ENCODE measurements at regions of chr13 and their contacts with region 1.

Region 1: GRCh38 chr13:102845630-102846260 is at the start of gene ERCC5:
- DNase-seq: peak; percentile 92
- ATAC-seq: peak; percentile 97
- H3K4me3 ChIP-seq: peak within 1 kb of the TSS; percentile 86 to 94 (median 89)
- H3K27ac ChIP-seq: peak within 1 kb of the TSS; percentile 90
- H3K4me1 ChIP-seq: peaks cover 15% of the 10 kb centered on the region
- H3K27me3 ChIP-seq: no peaks in the 10 kb centered on the region; a peak in 1 of 5 replicates
- CTCF ChIP-seq: peak; percentile 85
- EP300 ChIP-seq: peak in 1 of 2 experiments; percentile 36; a peak in 1 of 4 replicates
- POLR2A ChIP-seq: peak; percentile 77 to 92
- RAD21 ChIP-seq: peak; percentile 47
- total RNA-seq, gene ERCC5: 32.7 and 35.5 TPM in 2 replicates

Region 2: GRCh38 chr13:102580552-102581169 is 265.1 kb before region 1 on chr13:
- CTCF ChIA-PET with region 1: interaction called, 12 read pairs
- POLR2A ChIA-PET with region 1: interaction called, 4 read pairs
- in situ Hi-C with region 1: no loop called
- intact Hi-C with region 1: loop called (anchors 1 kb)
- DNase-seq: peak; percentile 55
- ATAC-seq: peak; percentile 87
- H3K4me3 ChIP-seq: no peak overlapping the region
- H3K27ac ChIP-seq: no peak overlapping the region
- H3K4me1 ChIP-seq: no peaks in the 10 kb centered on the region
- H3K27me3 ChIP-seq: peaks cover 0 to 14% of the 10 kb centered on the region in 2 experiments; a peak in 4 of 5 replicates
- CTCF ChIP-seq: peak; percentile 78
- EP300 ChIP-seq: no peak
- POLR2A ChIP-seq: no peak
- RAD21 ChIP-seq: peak; percentile 55

Region 3: DNA sequence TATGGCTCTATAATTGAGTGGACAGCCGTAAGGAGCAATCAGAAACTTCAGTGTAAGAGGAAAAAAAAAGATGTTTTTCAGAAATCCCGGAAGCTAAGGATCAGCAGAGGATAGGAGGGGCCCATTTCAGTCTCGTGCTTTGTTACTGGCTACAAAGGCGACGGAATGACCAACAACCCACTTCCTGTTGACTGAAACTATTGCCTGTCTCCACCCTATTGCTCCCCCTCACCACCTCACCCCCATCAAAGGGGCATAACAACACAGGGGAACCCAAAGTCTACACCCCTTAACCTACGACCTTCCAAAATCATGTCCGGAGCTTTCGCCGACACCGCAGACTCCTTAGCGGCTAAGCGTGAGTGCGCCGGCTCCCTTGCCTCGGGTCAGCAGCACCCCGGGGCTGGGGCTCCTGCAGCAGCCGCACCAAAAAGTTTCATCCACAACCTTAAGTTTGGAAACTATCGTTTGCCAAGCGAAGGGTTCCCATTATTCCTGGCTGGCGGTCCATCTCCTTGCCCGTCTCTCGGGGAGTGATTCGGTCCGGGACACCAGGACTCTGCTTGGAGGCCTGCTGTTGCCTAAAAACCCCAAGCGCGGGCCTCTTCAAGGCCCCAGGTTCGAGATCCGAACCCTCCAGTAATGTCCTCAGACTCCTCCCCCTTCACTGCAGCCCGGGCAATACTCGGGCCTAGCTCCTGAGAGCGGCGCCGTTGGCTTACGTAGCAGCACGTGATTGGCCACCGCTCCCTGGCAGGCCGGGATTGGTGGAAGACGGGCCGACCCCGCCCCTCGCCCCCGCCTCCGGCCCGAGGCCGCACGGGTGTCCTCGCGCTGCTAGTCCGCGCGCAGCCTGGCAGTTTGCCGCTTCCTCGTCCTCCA is 249.4 kb before region 1 on chr13 and contains the start of gene TPP2:
- CTCF ChIA-PET with region 1: interaction called, 4 read pairs
- POLR2A ChIA-PET with region 1: interaction called, 31 read pairs
- in situ Hi-C with region 1: loop called (anchors 5 kb)
- intact Hi-C with region 1: loop called (anchors 1 kb)
- DNase-seq: peak; percentile 94
- ATAC-seq: peak; percentile 93
- H3K4me3 ChIP-seq: peak within 1 kb of the TSS; percentile 85 to 92 (median 88)
- H3K27ac ChIP-seq: peak within 1 kb of the TSS; percentile 94
- H3K4me1 ChIP-seq: peaks cover 49% of the 10 kb centered on the region
- H3K27me3 ChIP-seq: no peaks in the 10 kb centered on the region; a peak in 2 of 5 replicates
- CTCF ChIP-seq: no peak
- EP300 ChIP-seq: no peak
- POLR2A ChIP-seq: peak; percentile 83 to 94
- RAD21 ChIP-seq: no peak
- total RNA-seq, gene TPP2: 52.1 and 71.7 TPM in 2 replicates

Region 4: DNA sequence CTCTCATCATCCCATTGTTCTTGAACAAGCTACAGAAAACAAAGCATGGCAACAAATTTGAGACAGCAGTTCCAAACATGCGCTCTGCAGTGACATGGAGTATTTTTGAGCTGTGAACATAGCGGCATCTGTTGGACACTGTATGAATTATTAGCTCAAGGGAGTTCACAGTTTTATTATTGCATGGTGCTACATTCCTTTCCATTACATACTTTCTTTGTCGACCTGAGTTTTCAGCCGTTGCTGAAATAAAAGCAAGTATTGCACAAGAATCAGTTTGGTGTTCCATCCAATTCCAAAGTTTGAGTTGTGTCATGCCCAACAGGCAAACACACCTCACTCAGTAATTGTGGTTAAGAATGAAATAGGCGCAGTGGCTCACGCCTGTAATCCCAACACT is 120.8 kb before region 1 on chr13:
- CTCF ChIA-PET with region 1: interaction called, 10 read pairs
- POLR2A ChIA-PET with region 1: no interaction called
- in situ Hi-C with region 1: no loop called
- intact Hi-C with region 1: loop called (anchors 1 kb)
- DNase-seq: peak; percentile 82
- ATAC-seq: peak; percentile 97
- H3K4me3 ChIP-seq: no peak overlapping the region
- H3K27ac ChIP-seq: no peak overlapping the region
- H3K4me1 ChIP-seq: peaks cover 9% of the 10 kb centered on the region; the same call in 1 of the 2 replicates
- H3K27me3 ChIP-seq: no peaks in the 10 kb centered on the region
- CTCF ChIP-seq: peak; percentile 81
- EP300 ChIP-seq: peak in 1 of 2 experiments; percentile 20; a peak in 1 of 4 replicates
- POLR2A ChIP-seq: no peak
- RAD21 ChIP-seq: 0 out of 2 replicates have a peak, but pooled peaks have one; percentile 32

Region 5: DNA sequence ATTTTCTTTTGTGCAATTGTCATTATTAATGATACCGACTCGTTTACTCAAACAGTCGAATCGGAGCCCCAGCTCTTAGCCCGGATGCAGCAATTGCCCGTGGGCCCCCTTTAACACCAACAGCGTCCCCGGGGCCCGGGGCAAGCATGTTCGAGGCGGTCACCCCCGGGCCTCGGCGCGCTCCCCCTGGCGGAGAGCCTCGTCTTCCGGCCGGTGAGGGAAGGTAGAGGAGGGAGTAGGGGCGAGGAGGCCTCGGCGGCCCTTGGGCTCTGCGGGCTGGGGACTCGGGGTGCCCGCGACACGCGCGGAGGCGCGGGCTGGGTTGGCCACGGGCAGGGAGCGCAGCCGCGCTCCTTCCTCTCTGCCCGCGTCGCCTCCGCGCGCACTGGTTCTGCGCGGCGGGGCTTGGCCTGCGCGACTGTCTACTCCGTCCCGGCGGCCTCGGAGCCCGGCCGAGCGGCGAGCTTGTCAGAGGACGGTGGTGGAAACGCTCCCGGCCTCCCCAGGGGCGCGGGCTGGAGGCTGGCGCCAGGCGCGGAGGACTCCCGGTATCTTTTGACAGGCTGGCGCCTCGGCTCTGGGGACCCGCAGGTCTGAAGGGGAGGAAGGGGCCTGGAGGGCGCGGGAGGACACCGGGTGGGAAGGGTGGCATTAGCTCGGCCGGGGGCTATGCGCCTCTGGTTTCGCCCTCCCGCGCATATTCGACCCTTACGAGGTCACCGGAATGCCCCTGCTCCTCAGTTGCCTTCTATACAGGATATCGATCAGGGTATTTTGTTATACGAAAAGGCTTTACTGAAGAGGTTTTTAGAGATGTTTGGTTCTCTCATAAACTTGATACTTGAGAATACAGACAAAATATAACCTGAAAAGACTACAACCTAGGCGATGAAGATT is 45.4 kb before region 1 on chr13:
- CTCF ChIA-PET with region 1: interaction called, 4 read pairs
- POLR2A ChIA-PET with region 1: interaction called, 21 read pairs
- in situ Hi-C with region 1: no loop called
- intact Hi-C with region 1: loop called (anchors 1 kb)
- DNase-seq: peak; percentile 66
- ATAC-seq: peak; percentile 88
- H3K4me3 ChIP-seq: peak overlapping the region; percentile 70 to 89 (median 83)
- H3K27ac ChIP-seq: peak overlapping the region; percentile 78
- H3K4me1 ChIP-seq: peaks cover 24% of the 10 kb centered on the region
- H3K27me3 ChIP-seq: no peaks in the 10 kb centered on the region; a peak in 1 of 5 replicates
- CTCF ChIP-seq: peak; percentile 89
- EP300 ChIP-seq: no peak
- POLR2A ChIP-seq: peak; percentile 37 to 67; a peak in 2 of 4 replicates
- RAD21 ChIP-seq: peak; percentile 70

Region 6: DNA sequence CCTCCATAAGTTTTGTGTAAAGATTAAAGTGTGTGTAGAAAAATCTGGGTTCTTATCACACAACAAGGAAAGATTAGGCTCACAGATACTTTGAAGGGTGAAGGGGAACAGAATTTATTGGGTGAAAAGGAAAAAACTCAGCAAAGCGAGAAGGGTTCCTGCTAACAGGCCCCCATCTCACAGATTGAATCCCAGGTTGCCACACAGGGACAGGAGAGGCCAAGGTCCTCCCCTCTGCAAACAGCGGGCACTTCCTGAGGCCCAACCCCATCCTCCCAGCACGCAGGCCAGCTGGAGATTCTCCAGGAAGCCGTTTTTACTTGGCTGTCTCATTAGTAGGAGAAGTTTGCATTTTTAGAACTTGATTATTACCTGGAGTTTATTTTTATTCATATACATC is 15.1 kb before region 1 on chr13:
- CTCF ChIA-PET with region 1: no interaction called
- POLR2A ChIA-PET with region 1: interaction called, 18 read pairs
- in situ Hi-C with region 1: no loop called
- intact Hi-C with region 1: loop called (anchors 1 kb)
- DNase-seq: peak; percentile 73
- ATAC-seq: peak; percentile 100
- H3K4me3 ChIP-seq: peak overlapping the region in 2 of 3 experiments; percentile 20 to 53; a peak in 3 of 6 replicates
- H3K27ac ChIP-seq: peak overlapping the region; percentile 77
- H3K4me1 ChIP-seq: peaks cover 16% of the 10 kb centered on the region
- H3K27me3 ChIP-seq: no peaks in the 10 kb centered on the region
- CTCF ChIP-seq: no peak
- EP300 ChIP-seq: peak in 1 of 2 experiments; percentile 58; a peak in 2 of 4 replicates
- POLR2A ChIP-seq: peak; percentile 42 to 64; a peak in 2 of 4 replicates
- RAD21 ChIP-seq: 0 out of 2 replicates have a peak, but pooled peaks have one; percentile 20

Region 7: GRCh38 chr13:103941506-103942140 is 1095.9 kb after region 1 on chr13:
- CTCF ChIA-PET with region 1: no interaction called
- POLR2A ChIA-PET with region 1: no interaction called
- in situ Hi-C with region 1: no loop called
- intact Hi-C with region 1: no loop called
- DNase-seq: no peak
- ATAC-seq: no peak
- H3K4me3 ChIP-seq: no peak overlapping the region
- H3K27ac ChIP-seq: no peak overlapping the region
- H3K4me1 ChIP-seq: no peaks in the 10 kb centered on the region
- H3K27me3 ChIP-seq: no peaks in the 10 kb centered on the region; a peak in 1 of 5 replicates
- CTCF ChIP-seq: no peak
- EP300 ChIP-seq: no peak
- POLR2A ChIP-seq: no peak
- RAD21 ChIP-seq: no peak